ENCODE measurements at regions of chr22 and their contacts with region 1.

Region 1: DNA sequence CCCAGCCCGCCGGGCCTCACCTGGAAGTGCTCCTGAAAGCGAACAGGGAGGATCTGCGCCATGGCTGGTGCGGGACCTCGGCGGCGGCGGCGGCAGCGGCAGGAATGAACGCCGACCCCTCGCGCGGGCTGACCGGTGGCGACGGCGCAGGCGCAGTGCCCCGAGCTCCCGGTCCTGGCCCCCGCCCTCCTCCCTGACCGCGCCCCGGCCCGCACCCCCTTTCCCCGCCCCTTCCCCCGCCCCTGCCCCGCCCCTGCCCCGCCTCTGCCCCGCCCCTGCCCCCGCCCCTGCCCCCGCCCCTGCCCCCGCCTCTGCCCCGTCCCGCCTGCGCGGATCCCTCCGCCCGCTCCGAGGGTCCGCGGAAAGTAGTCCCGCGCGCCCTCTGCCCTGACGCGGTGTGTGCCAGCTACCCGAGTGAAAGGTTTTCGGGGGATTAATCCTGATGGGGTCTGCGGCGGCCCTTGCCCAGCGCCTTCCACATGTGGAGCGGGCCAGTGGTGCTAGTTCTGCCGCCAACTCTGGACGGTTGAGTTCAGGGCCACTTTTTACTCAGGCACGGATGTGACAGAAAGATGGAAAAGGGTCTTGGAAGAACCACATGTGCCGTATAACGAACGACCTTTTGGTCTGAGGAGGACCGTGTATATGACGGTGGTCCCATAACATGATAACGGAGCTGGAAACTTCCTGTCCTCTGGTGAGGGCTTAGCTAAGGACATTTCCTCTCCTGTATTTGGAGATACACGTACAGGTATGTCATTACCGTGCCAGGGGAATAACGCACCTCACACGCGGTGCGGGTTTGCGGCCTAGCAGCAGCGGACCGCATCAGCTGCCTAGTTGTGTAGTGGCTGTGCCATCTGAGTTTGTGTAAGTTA is at the start of gene CLTCL1:
- DNase-seq: peak; percentile 87 to 95 (median 94)
- ATAC-seq: peak; percentile 86 to 92
- H3K4me3 ChIP-seq: peak within 1 kb of the TSS; percentile 95
- H3K27ac ChIP-seq: peak within 1 kb of the TSS; percentile 87
- H3K4me1 ChIP-seq: peaks cover 13% of the 10 kb centered on the region
- H3K27me3 ChIP-seq: no peaks in the 10 kb centered on the region
- total RNA-seq, gene CLTCL1: 16.6 to 26.7 (median 21.7) TPM

Region 2: GRCh38 chr22:19168211-19168890 is 123.5 kb before region 1 on chr22:
- intact Hi-C with region 1: no loop called
- DNase-seq: no peak
- ATAC-seq: no peak
- H3K4me3 ChIP-seq: no peak overlapping the region
- H3K27ac ChIP-seq: no peak overlapping the region
- H3K4me1 ChIP-seq: peaks cover 9% of the 10 kb centered on the region
- H3K27me3 ChIP-seq: no peaks in the 10 kb centered on the region

Region 3: DNA sequence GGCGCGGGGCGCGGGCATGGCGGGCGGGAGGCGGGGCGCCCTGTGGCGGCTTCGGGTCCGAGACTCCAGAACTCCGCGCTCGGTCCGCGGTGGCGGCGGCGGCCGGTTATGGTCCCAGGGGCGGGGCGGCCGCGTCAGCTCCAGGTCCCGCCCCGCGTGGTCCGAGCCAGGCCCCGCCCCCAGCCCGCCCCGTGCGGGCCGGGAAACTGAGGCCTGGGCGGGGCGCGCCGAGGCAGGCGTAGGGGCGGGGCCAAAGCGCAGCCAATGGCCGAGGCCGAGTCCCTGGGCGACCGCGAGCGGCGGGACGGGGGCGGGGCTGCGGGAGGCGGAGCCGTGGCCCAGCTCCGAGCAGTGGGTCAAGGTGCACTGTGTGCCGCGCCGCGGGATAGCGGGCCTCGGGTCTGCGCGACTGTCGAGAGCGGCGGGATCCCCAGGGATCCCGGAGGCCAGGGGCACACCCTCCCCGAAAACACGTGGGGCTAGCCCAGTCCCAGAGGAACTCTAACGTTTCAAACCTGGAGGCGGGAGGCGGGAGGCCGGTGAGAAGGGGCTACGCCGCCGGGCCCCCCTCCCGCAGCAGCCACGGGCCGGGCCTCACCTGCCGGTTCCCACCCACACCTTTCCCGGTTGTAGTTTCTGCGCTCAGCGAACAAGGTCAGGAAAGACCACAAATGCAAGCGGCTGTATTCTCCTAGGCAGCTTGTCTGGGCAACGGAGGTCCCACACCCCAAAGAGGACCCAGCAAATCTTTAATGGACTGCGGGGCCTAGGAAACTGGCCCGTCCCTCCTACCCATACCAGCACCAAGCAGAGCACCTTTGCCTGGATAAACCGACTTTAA is 112.9 kb before region 1 on chr22 and contains the start of gene SLC25A1:
- intact Hi-C with region 1: loop called in 1 of 4 experiments (anchors 5 kb)
- DNase-seq: peak; percentile 94 to 98 (median 97)
- ATAC-seq: peak; percentile 92 to 94
- H3K4me3 ChIP-seq: peak within 1 kb of the TSS; percentile 91
- H3K27ac ChIP-seq: peak within 1 kb of the TSS; percentile 88
- H3K4me1 ChIP-seq: peaks cover 3% of the 10 kb centered on the region
- H3K27me3 ChIP-seq: no peaks in the 10 kb centered on the region
- total RNA-seq, gene SLC25A1: 11.2 to 25.2 (median 18.6) TPM

Region 4: DNA sequence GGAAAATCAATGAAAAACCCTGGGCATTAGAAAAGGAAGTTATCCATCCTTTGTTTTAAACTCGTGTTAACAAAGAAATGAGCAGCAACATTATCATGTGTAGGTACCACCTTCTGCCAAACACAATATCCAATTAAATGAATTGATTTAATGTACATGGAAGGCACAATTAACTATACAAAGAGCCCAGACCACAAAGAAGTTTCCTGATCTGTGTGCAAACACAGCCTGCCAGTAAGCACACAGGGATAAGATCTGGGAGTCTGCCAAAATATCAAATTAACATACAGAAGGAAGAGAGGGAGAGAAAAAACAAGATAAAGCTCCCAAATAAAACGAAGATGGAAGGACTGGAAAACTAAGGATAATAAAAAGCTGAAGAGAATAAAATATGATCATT is 59.2 kb before region 1 on chr22:
- intact Hi-C with region 1: no loop called
- DNase-seq: no peak
- ATAC-seq: no peak
- H3K4me3 ChIP-seq: no peak overlapping the region
- H3K27ac ChIP-seq: no peak overlapping the region
- H3K4me1 ChIP-seq: no peaks in the 10 kb centered on the region
- H3K27me3 ChIP-seq: no peaks in the 10 kb centered on the region